ENCODE measurements at regions of chr16 and their contacts with region 1.

Region 1: DNA sequence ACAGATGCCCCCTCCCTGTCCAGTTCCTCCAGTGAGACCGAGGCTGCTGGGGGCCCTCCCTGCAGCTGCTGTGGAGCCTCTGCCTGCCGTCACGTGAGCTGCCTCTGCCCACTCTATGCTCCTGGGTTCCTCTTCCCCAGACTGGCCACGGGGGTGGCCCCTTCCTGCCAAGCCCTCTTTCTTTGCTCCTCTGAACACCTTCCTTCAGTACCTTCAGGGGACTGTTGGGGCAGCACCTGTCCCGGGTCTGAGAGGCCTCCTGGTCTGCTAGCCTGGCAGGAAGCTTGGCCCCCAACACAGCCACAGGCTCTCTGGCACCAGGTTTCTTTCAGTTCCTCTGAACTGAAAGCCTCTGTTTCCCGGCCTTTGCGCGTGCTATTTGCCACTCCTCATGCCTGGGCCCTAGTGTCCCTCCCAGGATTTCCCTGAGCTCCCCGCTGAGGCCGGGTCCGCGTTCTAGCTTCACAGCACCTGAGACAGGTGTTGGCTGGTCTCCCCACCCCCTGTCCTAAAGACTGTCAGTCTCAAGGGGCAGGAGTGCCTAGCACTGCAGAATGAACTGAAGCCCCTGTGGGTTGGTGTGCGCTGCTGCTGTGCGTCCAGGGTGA is 6.6 kb upstream of the ATP6V0C start:
- DNase-seq: peak; percentile 41
- ATAC-seq: peak; percentile 90
- H3K4me3 ChIP-seq: no peak overlapping the region
- H3K27ac ChIP-seq: peak overlapping the region; percentile 83
- H3K4me1 ChIP-seq: peaks cover 33% of the 10 kb centered on the region
- H3K27me3 ChIP-seq: no peaks in the 10 kb centered on the region
- CTCF ChIP-seq: peak; percentile 26 to 44 (median 39); a peak in 4 of 6 replicates
- EP300 ChIP-seq: no peak; a peak in 1 of 4 replicates
- POLR2A ChIP-seq: peak; percentile 34; the same call in 1 of the 2 replicates
- RAD21 ChIP-seq: 0 out of 2 replicates have a peak, but pooled peaks have one; percentile 6

Region 2: DNA sequence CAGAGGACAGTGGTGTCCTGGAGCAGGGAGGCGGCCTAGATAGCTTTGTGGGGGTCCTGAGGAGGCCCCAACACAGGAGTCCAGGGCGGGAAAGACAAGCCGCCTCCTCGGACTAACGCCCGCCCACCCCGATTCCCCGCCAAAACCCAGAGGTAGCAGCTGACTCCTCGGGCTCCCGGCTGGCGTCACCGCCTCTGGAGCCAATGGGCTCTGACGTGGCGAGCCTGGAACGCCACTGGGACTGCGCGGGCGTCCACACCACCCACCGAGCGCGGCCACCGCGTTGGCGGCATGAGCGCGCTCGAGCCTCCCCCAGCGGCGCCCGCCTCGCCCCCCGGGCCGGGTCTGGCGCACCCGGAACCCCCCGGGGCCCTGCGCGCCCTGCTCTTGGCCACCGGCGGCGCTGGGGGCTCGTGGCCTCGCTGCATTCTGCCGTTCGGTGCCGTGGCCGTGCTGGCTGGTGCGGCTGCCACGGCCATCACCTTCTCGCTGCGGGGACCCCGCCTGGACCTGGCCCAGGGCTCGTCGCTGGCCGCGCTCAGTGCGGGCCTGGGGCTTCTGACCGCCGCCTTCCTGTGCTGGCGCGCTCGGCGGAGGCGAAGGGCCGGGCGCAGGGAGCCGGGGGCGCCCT is 39.5 kb before region 1 on chr16:
- CTCF ChIA-PET with region 1: interaction called, 3 read pairs
- POLR2A ChIA-PET with region 1: interaction called, 6 read pairs
- RAD21 ChIA-PET with region 1: interaction called, 3 read pairs
- SMC1A ChIA-PET with region 1: interaction called, 3 read pairs
- in situ Hi-C with region 1: no loop called
- intact Hi-C with region 1: loop called (anchors 5 kb)
- DNase-seq: no peak
- ATAC-seq: peak; percentile 55
- H3K4me3 ChIP-seq: peak overlapping the region; percentile 72; the same call in 1 of the 2 replicates
- H3K27ac ChIP-seq: no peak overlapping the region
- H3K4me1 ChIP-seq: peaks cover 13% of the 10 kb centered on the region
- H3K27me3 ChIP-seq: peaks cover 0 to 2% of the 10 kb centered on the region in 2 experiments; a peak in 1 of 4 replicates
- CTCF ChIP-seq: peak in 1 of 3 experiments; percentile 13; a peak in 1 of 6 replicates
- EP300 ChIP-seq: no peak; a peak in 1 of 4 replicates
- POLR2A ChIP-seq: peak; percentile 68
- RAD21 ChIP-seq: no peak

Region 3: DNA sequence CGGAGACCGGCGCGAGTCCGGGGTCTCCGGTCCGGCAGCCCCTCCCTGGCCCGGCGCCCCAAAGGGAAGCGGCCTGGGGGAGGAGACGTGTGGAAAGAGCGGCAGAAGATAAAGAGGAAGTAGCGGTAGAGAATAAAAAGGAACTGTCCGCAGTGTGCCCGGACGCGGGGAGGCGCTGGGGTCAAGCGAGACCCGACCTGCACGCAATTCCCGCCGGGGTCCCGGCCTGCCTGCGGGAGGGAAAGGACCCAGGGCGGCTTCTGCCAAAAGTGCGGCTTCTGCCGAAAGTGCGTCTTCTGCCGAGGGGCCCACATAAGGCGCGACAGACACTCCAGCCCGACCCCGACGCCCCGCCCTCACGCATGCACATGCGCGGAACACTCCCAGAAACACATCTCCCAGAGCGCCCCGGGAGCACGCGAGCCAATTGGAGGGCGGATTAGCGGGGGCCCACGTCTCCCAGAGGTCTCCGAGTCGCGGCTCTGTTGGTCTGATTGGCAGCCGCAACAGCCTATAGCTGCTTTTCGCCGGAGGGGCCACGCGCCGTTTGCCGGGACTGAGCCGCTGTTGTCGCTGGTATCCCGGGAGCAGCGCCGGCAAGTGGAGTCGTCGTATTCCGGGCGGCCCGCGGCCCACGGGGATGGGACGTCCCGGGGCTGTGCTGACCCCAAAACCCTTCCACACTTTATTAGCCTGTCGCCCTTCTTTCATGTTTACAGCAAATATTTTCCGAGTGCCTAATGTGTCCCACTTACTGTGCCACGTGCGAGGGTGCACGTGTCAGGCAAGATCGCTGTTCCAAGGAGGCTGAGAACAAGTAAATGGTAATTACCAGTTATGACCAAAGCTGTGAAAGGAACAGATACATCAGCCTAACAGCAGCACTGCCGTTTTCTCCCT is 757.2 kb after region 1 on chr16:
- CTCF ChIA-PET with region 1: no interaction called
- POLR2A ChIA-PET with region 1: no interaction called
- RAD21 ChIA-PET with region 1: no interaction called
- SMC1A ChIA-PET with region 1: no interaction called
- in situ Hi-C with region 1: no loop called
- intact Hi-C with region 1: no loop called
- DNase-seq: peak; percentile 84
- ATAC-seq: peak; percentile 96
- H3K4me3 ChIP-seq: peak overlapping the region; percentile 82
- H3K27ac ChIP-seq: peak overlapping the region; percentile 93
- H3K4me1 ChIP-seq: peaks cover 8% of the 10 kb centered on the region; the same call in 1 of the 2 replicates
- H3K27me3 ChIP-seq: no peaks in the 10 kb centered on the region
- CTCF ChIP-seq: peak; percentile 38 to 47 (median 44)
- EP300 ChIP-seq: 0 out of 4 replicates have a peak, but pooled peaks of 1 of the 2 experiments have one; percentile 18
- POLR2A ChIP-seq: peak; percentile 86
- RAD21 ChIP-seq: peak; percentile 45; the same call in 1 of the 2 replicates

Measured in GM12878 (cell line).